ENCODE measurements at regions of chr10 and their contacts with region 1.

Region 1: DNA sequence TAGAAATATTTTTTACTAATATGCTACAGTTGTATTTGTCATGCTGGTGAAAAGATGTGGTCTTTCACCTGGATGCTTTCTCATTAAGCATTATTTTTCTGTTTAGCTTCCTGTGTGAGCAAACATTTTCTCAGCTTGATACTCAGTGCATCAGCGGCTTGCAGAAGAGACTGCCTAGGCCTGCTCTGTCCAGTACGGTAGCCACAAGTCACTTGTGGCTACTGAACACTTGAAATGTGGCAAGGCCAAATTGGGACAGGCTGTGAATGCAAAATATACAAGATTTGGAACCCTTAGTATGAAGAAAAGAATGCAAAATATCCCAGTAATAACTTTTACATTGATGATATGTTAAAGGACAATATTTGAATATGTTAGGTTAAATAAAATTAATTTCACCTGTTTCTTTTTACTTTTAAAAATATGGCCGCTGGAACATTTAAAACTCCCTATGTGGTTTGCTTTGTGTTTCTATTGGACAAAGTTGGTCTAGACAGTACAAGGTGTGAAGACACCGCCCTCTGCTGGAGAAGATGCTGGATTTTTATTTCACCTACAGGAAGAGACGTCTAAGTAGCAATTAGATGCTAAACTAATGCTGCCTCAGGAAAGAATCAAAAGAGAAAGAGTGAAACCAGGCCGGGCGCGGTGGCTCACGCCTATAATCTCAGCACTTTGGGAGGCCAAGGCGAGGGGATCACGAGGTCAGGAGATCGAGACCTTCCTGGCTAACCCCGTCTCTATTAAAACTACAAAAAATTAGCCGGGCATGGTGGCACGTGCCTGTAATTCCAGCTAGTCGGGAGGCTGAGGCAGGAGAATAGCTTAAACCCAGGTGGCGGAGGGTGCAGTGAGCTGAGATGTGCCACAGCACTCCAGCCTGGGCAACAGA is 5.3 kb downstream of the SRGN start:
- DNase-seq: peak in 4 of 5 donors; percentile 73 to 90 (median 84)
- H3K4me3 ChIP-seq: no peak overlapping the region
- H3K27ac ChIP-seq: no peak overlapping the region
- H3K4me1 ChIP-seq: no peaks in the 10 kb centered on the region
- H3K27me3 ChIP-seq: no peaks in the 10 kb centered on the region
- CTCF ChIP-seq: peak; percentile 82

Region 2: GRCh38 chr10:69004821-69005220 is 88.4 kb before region 1 on chr10:
- intact Hi-C with region 1: loop called (anchors 10 kb)
- DNase-seq: peak in 2 of 5 donors; percentile 21 to 57
- H3K4me3 ChIP-seq: no peak overlapping the region
- H3K27ac ChIP-seq: no peak overlapping the region
- H3K4me1 ChIP-seq: no peaks in the 10 kb centered on the region
- H3K27me3 ChIP-seq: no peaks in the 10 kb centered on the region
- CTCF ChIP-seq: peak; percentile 41

Measured in kidney (tissue), 22 donors.